ENCODE measurements at regions of chr18 and their contacts with region 1.

Region 1: DNA sequence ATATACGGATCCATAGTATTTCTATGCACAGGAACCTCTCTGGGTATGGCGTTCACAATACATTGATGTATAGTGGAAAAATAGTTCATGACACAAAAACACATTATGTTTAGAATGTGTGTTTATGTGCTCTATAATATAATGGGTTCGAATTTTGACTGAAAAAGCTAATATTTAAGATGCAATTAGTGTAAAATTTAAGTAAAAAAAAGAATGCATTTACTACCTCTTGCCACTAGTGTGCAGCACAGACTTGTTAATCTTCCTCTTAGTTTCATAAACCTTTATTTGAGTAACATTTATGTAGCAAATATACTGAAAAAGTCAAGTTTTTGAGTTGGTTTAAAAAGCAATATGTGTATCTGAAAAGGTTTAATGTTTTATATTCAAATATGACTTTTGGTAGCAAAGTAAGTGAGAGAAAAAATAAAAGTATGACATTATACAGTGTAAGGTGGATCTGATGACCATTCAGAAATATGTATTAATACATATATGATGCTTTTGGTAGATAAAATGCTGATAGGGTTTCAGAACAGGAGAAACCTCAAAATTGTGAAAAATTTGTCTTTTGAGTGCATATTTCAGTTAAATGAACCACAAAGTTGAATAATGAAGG is 49.4 kb downstream of the CCDC102B start:
- DNase-seq: no peak
- H3K4me3 ChIP-seq: no peak overlapping the region
- H3K27ac ChIP-seq: no peak overlapping the region
- H3K4me1 ChIP-seq: no peaks in the 10 kb centered on the region
- H3K27me3 ChIP-seq: no peaks in the 10 kb centered on the region
- CTCF ChIP-seq: peak; percentile 25 to 51 (median 46)
- EP300 ChIP-seq: no peak
- POLR2A ChIP-seq: no peak

Region 2: DNA sequence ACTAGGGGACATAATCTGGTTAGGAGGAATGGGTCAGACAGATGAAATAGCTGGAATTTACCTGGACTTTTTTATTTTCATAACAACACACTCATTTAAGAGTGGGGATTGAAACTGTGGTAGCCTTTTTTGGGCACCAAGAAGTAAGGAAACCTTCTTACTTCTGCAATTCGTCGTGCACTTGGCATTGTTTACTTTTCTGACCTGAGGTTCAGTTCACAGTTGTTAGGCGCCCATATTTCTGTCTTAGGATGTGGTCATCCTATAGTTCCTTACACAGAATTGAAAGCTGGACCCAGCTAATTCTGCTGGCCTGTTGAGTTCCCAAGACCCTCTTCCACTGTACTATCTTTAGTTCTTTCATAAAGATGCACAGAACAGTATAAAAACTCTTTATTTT is 205.3 kb before region 1 on chr18:
- in situ Hi-C with region 1: no loop called
- intact Hi-C with region 1: no loop called
- DNase-seq: no peak
- H3K4me3 ChIP-seq: no peak overlapping the region
- H3K27ac ChIP-seq: no peak overlapping the region
- H3K4me1 ChIP-seq: no peaks in the 10 kb centered on the region
- H3K27me3 ChIP-seq: no peaks in the 10 kb centered on the region
- CTCF ChIP-seq: no peak
- EP300 ChIP-seq: no peak
- POLR2A ChIP-seq: no peak

Region 3: DNA sequence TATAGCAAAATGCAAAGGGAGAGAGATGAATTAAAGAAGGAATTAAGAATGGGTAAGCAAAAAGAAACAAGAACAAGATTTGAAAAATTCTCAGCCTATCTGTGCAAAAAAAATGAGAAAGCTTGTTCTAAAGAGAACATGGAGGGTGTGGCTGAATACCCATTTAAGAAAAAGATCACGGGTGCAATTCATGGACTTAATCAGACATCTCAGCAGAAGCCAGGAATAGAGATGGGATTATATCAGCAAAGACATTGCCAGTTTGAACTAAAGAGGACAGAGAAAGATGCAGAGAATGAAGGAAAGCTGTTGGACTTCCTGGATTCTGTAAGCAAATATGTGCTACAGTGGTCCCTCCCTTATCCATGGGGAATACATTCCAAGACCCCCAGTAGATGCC is 1242.5 kb after region 1 on chr18:
- in situ Hi-C with region 1: loop called in 2 of 4 experiments (anchors 10 to 25 kb)
- intact Hi-C with region 1: no loop called
- DNase-seq: no peak
- H3K4me3 ChIP-seq: no peak overlapping the region
- H3K27ac ChIP-seq: no peak overlapping the region
- H3K4me1 ChIP-seq: no peaks in the 10 kb centered on the region
- H3K27me3 ChIP-seq: no peaks in the 10 kb centered on the region
- CTCF ChIP-seq: no peak
- EP300 ChIP-seq: no peak
- POLR2A ChIP-seq: no peak

Measured in transverse colon (tissue), 4 donors.